WTC11 (cell line): ENCODE measurements at regions of chr3 and their contacts with region 1.

Region 1: DNA sequence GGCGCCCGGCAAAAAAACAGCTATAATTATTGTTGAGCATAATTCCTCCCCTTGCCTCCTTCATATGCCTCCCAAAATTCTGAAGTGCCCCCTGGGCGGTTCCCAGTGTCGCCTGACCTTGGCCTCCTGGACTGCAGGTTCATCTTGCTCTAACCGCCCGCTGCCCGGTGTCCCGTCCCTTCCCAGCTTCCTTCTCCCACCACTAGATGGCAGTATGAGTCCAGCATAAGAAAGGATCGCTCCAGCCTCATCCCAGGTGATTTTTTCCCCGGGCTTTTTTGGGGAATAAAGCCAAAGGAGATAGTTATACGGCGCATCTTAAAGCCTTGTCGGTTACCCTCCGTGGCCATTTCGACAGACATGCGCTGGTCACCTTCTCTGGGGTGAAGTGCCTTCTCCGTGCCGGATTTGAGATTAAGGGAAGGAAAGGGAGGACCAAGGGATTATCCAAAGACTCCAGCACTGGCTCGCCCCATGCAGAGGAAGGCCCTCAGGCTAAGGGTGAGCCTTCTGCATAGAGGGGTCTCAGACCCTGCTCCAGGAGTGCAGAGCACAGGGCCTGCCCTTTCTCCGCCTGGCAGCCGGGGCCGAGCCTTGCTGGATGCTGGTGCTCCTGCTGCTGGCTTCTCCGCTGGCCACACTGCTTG is 45.8 kb upstream of the TRA2B start:
- DNase-seq: peak; percentile 82
- ATAC-seq: peak; percentile 89
- H3K4me3 Mint-ChIP-seq: peak overlapping the region; percentile 55
- H3K27ac Mint-ChIP-seq: no peak overlapping the region
- H3K4me1 Mint-ChIP-seq: peaks cover 3% of the 10 kb centered on the region; the same call in 1 of the 2 replicates
- H3K27me3 Mint-ChIP-seq: peaks cover 10% of the 10 kb centered on the region; the same call in 1 of the 2 replicates
- CTCF ChIP-seq: peak; percentile 88

Region 2: DNA sequence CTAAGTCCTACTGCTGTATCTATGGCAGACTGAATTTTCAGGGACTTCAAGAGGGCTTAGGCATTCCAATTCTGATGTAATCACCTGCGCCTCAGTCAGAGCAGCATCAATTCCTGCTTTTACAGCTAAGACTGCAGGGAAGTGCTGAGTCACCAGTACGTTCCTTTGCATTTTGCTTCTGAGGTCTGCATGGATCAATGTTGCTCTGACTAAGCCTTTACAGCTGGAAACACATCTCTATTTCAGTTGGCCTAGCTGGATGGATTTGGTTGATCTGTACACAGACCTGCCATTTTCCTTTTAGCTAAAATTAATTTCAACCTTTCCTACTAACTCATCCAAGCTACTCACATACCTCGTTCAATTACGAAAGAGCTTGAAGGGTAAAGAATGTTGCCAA is 74.0 kb after region 1 on chr3:
- CTCF ChIA-PET with region 1: no interaction called
- POLR2A ChIA-PET with region 1: no interaction called
- DNase-seq: no peak
- ATAC-seq: peak; percentile 79
- H3K4me3 Mint-ChIP-seq: no peak overlapping the region
- H3K27ac Mint-ChIP-seq: peak overlapping the region; percentile 88
- H3K4me1 Mint-ChIP-seq: peaks cover 34% of the 10 kb centered on the region
- H3K27me3 Mint-ChIP-seq: no peaks in the 10 kb centered on the region
- CTCF ChIP-seq: no peak

Region 3: GRCh38 chr3:186277268-186277909 is 293.8 kb after region 1 on chr3:
- CTCF ChIA-PET with region 1: interaction called, 23 read pairs
- POLR2A ChIA-PET with region 1: interaction called, 3 read pairs
- DNase-seq: no peak
- ATAC-seq: peak; percentile 98
- H3K4me3 Mint-ChIP-seq: no peak overlapping the region
- H3K27ac Mint-ChIP-seq: no peak overlapping the region
- H3K4me1 Mint-ChIP-seq: peaks cover 11% of the 10 kb centered on the region
- H3K27me3 Mint-ChIP-seq: no peaks in the 10 kb centered on the region; the same call in 1 of the 2 replicates
- CTCF ChIP-seq: no peak